GM10248 (cell line): ENCODE measurements at regions of chr2 and their contacts with region 1.

Region 1: GRCh38 chr2:130873700-130874346 is 37.1 kb downstream of the ARHGEF4 start:
- DNase-seq: peak; percentile 79
- CTCF ChIP-seq: peak; percentile 70

Region 2: GRCh38 chr2:130824492-130825061 is 49.2 kb before region 1 on chr2:
- CTCF ChIA-PET with region 1: interaction called, 18 read pairs
- POLR2A ChIA-PET with region 1: no interaction called
- DNase-seq: peak; percentile 87
- CTCF ChIP-seq: no peak

Region 3: GRCh38 chr2:130850788-130851623 is 22.8 kb before region 1 on chr2:
- CTCF ChIA-PET with region 1: interaction called, 20 read pairs
- POLR2A ChIA-PET with region 1: no interaction called
- DNase-seq: no peak
- CTCF ChIP-seq: no peak

Region 4: GRCh38 chr2:130884503-130884902 is 10.7 kb after region 1 on chr2:
- CTCF ChIA-PET with region 1: interaction called, 24 read pairs
- POLR2A ChIA-PET with region 1: no interaction called
- DNase-seq: no peak
- CTCF ChIP-seq: no peak

Region 5: GRCh38 chr2:130890941-130891669 is 17.3 kb after region 1 on chr2:
- CTCF ChIA-PET with region 1: interaction called, 10 read pairs
- POLR2A ChIA-PET with region 1: no interaction called
- DNase-seq: no peak
- CTCF ChIP-seq: no peak

Region 6: GRCh38 chr2:130920415-130921163 is 46.8 kb after region 1 on chr2:
- CTCF ChIA-PET with region 1: interaction called, 12 read pairs
- POLR2A ChIA-PET with region 1: no interaction called
- DNase-seq: peak; percentile 66
- CTCF ChIP-seq: peak; percentile 83